Ovary (tissue), 10 donors: ENCODE measurements at regions of chr16 and their contacts with region 1.

Region 1: DNA sequence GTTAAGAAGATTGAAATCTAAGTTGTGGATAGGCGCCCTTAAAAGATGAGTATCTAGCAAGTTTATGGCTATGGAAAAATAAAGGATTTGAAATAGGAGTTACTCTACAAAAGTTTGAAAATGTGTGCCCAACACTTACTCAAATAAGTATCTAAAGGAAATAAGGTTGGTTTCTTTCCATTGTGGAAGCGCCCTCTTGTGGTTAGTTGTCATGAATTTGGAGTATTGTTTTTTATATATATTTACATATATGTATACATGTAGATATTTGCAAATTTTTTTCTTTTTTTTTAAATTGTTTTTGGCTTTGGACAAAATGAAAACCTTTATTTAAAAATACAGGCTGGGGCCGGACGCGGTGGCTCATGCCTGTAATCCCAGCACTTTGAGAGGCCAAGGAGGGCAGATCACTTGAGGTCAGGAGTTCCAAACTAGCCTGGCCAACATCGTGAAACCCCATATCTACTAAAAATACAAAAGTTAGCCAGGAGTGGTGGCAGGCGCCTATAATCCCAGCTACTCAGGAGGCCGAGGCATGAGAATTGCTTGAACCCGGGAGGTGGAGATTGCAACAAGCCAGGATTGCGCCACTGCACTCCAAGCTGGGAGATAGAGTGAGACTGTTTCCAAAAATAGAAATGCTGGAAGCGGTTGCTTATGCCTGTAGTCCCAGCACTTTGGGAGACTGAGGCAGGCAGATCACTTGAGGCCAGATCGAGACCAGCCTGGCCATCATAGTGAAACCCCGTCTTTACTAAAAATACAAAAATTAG is 24.0 kb upstream of the VPS4A start:
- DNase-seq: peak in 3 of 5 donors; percentile 44 to 74 (median 44)
- H3K4me3 ChIP-seq: no peak overlapping the region
- H3K27ac ChIP-seq: no peak overlapping the region
- H3K4me1 ChIP-seq: peaks cover 3% of the 10 kb centered on the region
- H3K27me3 ChIP-seq: no peaks in the 10 kb centered on the region
- CTCF ChIP-seq: peak; percentile 39 to 66 (median 43)
- EP300 ChIP-seq: no peak
- POLR2A ChIP-seq: no peak

Region 2: GRCh38 chr16:69150146-69150865 is 136.8 kb before region 1 on chr16:
- intact Hi-C with region 1: loop called (anchors 2 to 5 kb)
- DNase-seq: peak in 3 of 5 donors; percentile 34 to 74 (median 46)
- H3K4me3 ChIP-seq: no peak overlapping the region
- H3K27ac ChIP-seq: no peak overlapping the region
- H3K4me1 ChIP-seq: peaks cover 3% of the 10 kb centered on the region
- H3K27me3 ChIP-seq: no peaks in the 10 kb centered on the region
- CTCF ChIP-seq: peak; percentile 40 to 86 (median 72)
- EP300 ChIP-seq: no peak
- POLR2A ChIP-seq: no peak